Heart right ventricle (tissue), 16 donors: ENCODE measurements at regions of chr11 and their contacts with region 1.

Region 1: GRCh38 chr11:76048763-76049162 is 157.5 kb downstream of the WNT11 start:
- DNase-seq: no peak
- ATAC-seq: no peak
- H3K4me3 ChIP-seq: no peak overlapping the region
- H3K27ac ChIP-seq: no peak overlapping the region
- H3K4me1 ChIP-seq: peaks cover 0 to 14% (median 3%) of the 10 kb centered on the region in 9 donors
- H3K27me3 ChIP-seq: no peaks in the 10 kb centered on the region
- CTCF ChIP-seq: no peak

Region 2: GRCh38 chr11:75910426-75911145 is 138.2 kb before region 1 on chr11:
- intact Hi-C with region 1: loop called in 1 of 10 experiments (anchors 5 kb)
- DNase-seq: no peak
- ATAC-seq: no peak
- H3K4me3 ChIP-seq: no peak overlapping the region
- H3K27ac ChIP-seq: no peak overlapping the region
- H3K4me1 ChIP-seq: peaks cover 0 to 14% (median 0%) of the 10 kb centered on the region in 9 donors
- H3K27me3 ChIP-seq: no peaks in the 10 kb centered on the region
- CTCF ChIP-seq: no peak

Region 3: GRCh38 chr11:76074148-76075095 is 25.7 kb after region 1 on chr11:
- intact Hi-C with region 1: no loop called
- DNase-seq: no peak
- ATAC-seq: peak in 7 of 8 donors; percentile 17 to 63 (median 47)
- H3K4me3 ChIP-seq: no peak overlapping the region
- H3K27ac ChIP-seq: peak overlapping the region in 7 of 10 donors; percentile 1 to 72 (median 10)
- H3K4me1 ChIP-seq: peaks cover 0 to 51% (median 39%) of the 10 kb centered on the region in 9 donors
- H3K27me3 ChIP-seq: no peaks in the 10 kb centered on the region
- CTCF ChIP-seq: no peak

Region 4: DNA sequence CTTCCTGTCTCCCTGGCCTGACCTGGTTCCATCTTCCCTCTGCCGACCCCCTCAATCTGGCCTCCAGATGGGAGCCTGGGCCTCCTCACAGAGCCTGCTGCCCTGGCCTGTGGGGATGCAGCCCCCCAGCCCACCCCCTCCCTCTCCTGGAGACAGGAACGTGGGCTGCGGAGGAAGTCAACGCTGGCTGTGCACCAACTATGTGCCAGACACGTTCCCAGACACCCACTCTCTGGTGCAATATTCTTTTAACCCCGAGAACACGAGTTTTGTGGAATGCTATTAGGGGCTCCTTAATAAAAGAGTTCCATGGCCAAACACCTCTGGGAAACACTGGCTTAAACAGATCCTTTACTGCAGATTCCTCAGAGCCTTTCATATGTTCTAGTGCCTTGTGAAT is 141.6 kb after region 1 on chr11:
- intact Hi-C with region 1: no loop called
- DNase-seq: no peak
- ATAC-seq: no peak
- H3K4me3 ChIP-seq: no peak overlapping the region
- H3K27ac ChIP-seq: no peak overlapping the region
- H3K4me1 ChIP-seq: peaks cover 10 to 30% (median 22%) of the 10 kb centered on the region in 9 donors
- H3K27me3 ChIP-seq: no peaks in the 10 kb centered on the region
- CTCF ChIP-seq: no peak